ENCODE measurements at regions of chrX and their contacts with region 1.

Region 1: DNA sequence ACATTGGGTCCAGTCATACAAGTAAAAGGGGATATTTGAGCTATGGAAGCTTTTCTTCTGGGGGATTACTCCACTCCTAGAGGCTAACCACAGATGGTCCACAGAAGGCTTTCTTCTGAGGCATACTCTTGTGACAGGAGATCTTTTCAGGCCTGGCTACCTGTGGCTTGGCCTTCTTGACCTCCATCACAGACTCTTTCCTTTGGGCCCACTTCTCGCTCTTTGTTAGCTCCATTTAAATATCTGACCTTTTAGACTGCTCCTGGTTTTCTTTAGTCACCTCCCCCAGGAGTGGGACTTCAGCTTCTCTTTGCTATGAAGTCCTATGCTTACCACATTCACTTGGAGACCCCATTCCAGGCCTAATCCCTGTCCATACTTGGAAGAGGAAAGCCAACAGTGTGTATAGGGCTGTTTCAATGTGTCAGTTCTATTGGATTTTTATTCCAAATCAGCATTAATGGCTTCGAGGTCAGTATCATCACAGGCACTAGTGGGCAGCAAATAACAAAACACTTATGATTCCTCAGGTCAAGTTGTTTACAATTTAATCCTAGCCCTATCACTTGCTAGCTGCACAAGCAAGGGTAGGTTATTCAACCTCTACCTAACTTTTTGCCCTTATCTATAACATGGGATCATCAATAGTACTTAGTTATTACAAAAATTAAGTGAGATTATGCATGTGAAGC is 26.3 kb downstream of the GPC3 start:
- DNase-seq: no peak
- H3K4me3 ChIP-seq: no peak overlapping the region
- H3K27ac ChIP-seq: no peak overlapping the region
- H3K4me1 ChIP-seq: no peaks in the 10 kb centered on the region
- H3K27me3 ChIP-seq: no peaks in the 10 kb centered on the region
- CTCF ChIP-seq: peak in 1 of 2 donors; percentile 46

Region 2: GRCh38 chrX:133911825-133912495 is 47.2 kb before region 1 on chrX:
- CTCF ChIA-PET with region 1: no interaction called
- dilution Hi-C with region 1: no loop called
- in situ Hi-C with region 1: no loop called
- intact Hi-C with region 1: no loop called
- DNase-seq: no peak
- H3K4me3 ChIP-seq: no peak overlapping the region
- H3K27ac ChIP-seq: no peak overlapping the region
- H3K4me1 ChIP-seq: no peaks in the 10 kb centered on the region
- H3K27me3 ChIP-seq: no peaks in the 10 kb centered on the region
- CTCF ChIP-seq: no peak

Region 3: DNA sequence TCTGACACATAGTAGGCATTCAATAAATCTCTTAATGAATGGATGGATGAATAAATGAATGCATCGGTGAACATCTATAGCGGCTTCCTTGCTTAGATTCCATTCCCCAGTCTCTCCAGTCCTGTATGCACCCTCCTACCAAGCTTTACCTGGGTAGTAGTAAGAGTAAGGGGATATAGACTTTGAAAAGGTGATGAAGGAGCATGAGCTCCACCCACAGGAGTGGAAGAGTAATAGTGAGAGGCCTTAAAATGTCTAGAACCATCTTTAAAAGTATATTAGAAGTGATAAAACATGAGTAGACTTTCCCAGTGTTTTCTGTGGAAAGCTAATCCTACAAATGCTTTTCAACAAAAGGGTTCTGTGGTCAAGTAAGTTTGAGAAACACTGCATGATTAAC is 61.8 kb after region 1 on chrX:
- CTCF ChIA-PET with region 1: no interaction called
- dilution Hi-C with region 1: no loop called
- in situ Hi-C with region 1: no loop called
- intact Hi-C with region 1: loop called (anchors 1 kb)
- DNase-seq: no peak
- H3K4me3 ChIP-seq: no peak overlapping the region
- H3K27ac ChIP-seq: no peak overlapping the region
- H3K4me1 ChIP-seq: no peaks in the 10 kb centered on the region
- H3K27me3 ChIP-seq: no peaks in the 10 kb centered on the region
- CTCF ChIP-seq: peak in 1 of 2 donors; percentile 29

Region 4: DNA sequence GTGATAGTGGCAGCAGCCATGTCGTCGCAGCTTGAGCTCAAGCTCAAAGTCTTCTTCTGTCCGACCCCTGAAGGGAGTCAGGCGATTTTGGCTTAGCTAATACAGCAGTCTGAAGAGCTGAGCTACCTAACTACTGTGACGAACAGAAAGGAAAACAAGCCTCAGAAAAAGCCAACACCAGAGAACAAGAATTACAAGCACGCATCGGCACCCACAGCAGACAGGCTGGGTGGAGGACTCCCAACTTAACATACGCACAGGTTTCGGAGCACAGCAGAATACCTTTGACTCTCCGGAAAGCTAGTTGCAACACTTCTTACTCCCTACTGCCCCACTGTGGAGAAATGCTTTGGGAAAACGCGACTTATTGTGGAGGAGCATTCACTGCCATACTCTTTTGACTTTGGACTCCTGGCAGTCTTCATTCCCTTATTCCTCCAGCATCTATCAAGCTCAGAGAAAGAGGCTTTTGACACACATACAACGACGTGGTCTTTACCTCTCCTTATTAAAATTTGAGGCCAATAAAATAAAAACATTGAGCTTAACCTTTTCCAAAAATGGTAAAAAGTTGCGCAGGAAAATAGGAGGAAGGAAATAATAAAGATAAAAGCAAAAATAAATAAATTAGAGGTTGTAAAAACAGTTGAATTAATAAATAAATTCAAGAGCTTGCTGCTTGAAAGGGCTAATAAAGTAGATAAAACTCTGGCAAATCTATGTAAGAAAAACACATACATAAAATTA is 67.6 kb after region 1 on chrX:
- CTCF ChIA-PET with region 1: no interaction called
- dilution Hi-C with region 1: no loop called
- in situ Hi-C with region 1: no loop called
- intact Hi-C with region 1: loop called (anchors 1 kb)
- DNase-seq: peak; percentile 50
- H3K4me3 ChIP-seq: no peak overlapping the region
- H3K27ac ChIP-seq: no peak overlapping the region
- H3K4me1 ChIP-seq: no peaks in the 10 kb centered on the region
- H3K27me3 ChIP-seq: no peaks in the 10 kb centered on the region
- CTCF ChIP-seq: peak; percentile 49 to 65

Measured in mammary epithelial cell (primary cell).